ENCODE measurements at regions of chr2 and their contacts with region 1.

Region 1: GRCh38 chr2:239721991-239722759 is 303.0 kb downstream of the NDUFA10 start:
- DNase-seq: no peak
- ATAC-seq: no peak
- H3K4me3 ChIP-seq: no peak overlapping the region
- H3K27ac ChIP-seq: no peak overlapping the region
- H3K4me1 ChIP-seq: no peaks in the 10 kb centered on the region
- H3K27me3 ChIP-seq: no peaks in the 10 kb centered on the region
- CTCF ChIP-seq: no peak

Region 2: DNA sequence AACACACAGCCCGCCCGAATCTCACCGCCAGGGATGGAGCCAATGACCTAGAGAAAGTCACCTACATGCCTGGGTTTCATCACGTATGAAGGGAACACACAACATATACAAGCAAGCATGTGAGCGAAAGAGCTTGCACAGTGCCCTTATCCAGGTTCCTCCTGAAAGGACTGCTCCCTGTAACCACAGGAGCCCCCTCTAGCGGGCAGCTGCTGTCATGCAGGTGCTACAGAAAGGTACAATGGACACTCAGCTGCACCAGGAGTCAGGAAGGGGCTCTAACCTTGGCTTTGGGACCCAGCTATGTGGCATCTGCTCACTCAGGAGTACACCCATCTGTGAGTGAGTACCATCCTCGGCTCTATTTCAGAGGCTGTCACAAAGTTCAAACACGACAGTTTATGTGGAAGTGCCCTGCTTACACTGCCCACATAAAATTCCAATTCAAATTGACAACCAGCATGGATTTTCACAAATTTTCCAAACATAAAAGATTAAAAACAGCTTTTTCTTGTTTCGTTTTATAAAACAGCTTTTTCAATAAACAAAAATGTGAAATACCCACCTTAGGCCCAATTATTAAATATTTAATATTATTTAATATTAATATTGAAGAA is 299.4 kb after region 1 on chr2:
- CTCF ChIA-PET with region 1: no interaction called
- POLR2A ChIA-PET with region 1: interaction called, 12 read pairs
- in situ Hi-C with region 1: no loop called
- intact Hi-C with region 1: no loop called
- DNase-seq: peak; percentile 43
- ATAC-seq: peak; percentile 67
- H3K4me3 ChIP-seq: no peak overlapping the region
- H3K27ac ChIP-seq: no peak overlapping the region
- H3K4me1 ChIP-seq: peaks cover 16% of the 10 kb centered on the region
- H3K27me3 ChIP-seq: no peaks in the 10 kb centered on the region
- CTCF ChIP-seq: peak; percentile 95